ENCODE measurements at regions of chr1 and their contacts with region 1.

Region 1: DNA sequence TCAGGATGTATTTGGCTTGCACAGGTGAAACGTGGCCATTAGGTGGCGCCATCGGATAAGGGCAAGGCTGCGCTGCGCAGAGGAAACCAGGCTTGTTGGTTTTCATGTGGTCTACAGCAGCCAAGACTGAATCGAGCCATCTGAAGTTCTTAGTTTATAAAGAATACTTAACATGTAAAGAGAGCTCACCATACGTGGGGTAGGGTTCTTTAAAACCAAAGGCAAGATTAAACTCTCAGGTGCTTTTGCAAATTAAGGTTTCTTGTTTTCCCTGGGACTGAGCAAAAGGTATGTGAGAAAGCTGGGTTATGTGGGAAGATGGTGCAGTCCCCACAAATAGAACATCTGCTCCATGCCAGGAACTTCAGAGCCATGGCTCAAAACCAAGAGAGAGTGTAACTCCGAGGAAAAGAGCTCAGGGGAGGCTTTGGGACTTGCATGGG is 9.3 kb downstream of the MASP2 start:
- DNase-seq: peak; percentile 51
- ATAC-seq: peak; percentile 99
- H3K4me3 ChIP-seq: no peak overlapping the region
- H3K27ac ChIP-seq: no peak overlapping the region
- H3K4me1 ChIP-seq: no peaks in the 10 kb centered on the region
- H3K27me3 ChIP-seq: no peaks in the 10 kb centered on the region
- CTCF ChIP-seq: peak; percentile 96 to 99 (median 98); a peak in 5 of 6 replicates
- EP300 ChIP-seq: no peak
- POLR2A ChIP-seq: no peak
- RAD21 ChIP-seq: peak; percentile 99

Region 2: GRCh38 chr1:11026052-11026451 is 11.7 kb before region 1 on chr1:
- CTCF ChIA-PET with region 1: interaction called, 11 read pairs
- POLR2A ChIA-PET with region 1: interaction called, 3 read pairs
- RAD21 ChIA-PET with region 1: interaction called, 7 read pairs
- SMC1A ChIA-PET with region 1: interaction called, 5 read pairs
- in situ Hi-C with region 1: no loop called
- intact Hi-C with region 1: no loop called
- DNase-seq: no peak
- ATAC-seq: no peak
- H3K4me3 ChIP-seq: no peak overlapping the region
- H3K27ac ChIP-seq: no peak overlapping the region
- H3K4me1 ChIP-seq: no peaks in the 10 kb centered on the region
- H3K27me3 ChIP-seq: no peaks in the 10 kb centered on the region
- CTCF ChIP-seq: no peak
- EP300 ChIP-seq: no peak
- POLR2A ChIP-seq: no peak
- RAD21 ChIP-seq: no peak

Region 3: DNA sequence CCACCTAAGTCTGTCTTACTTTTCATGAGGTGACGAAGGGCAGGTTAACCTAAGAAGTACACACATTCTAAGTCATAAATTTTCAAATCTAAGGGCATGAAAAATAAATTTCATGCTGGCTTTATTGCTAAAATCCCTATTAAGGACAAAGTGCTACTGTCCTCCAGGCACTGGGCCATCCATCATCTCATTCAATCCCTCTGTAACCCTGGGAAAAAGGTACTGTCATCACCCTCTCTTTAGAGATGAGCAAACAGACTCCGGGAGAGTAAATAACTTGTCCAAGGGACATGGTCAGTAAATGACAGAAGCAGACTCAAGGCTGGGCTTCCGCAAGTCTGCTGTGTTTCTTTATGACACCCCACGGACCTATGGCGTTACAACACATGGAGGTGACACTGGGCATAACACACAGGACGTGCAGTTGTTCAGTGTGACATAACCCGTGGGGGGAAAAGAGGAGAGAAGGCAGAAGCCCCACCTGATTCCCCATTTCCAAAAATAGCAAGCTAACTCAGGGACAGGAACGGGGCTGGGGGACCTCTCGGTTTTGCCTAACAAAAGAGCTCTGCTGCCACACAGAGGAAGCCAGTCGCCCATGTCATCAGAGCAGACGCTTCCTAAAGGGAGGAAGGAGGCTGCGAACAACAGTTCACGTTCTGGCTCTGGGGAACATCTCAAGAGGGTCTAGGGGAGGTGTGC is 34.6 kb after region 1 on chr1:
- CTCF ChIA-PET with region 1: interaction called, 57 read pairs
- POLR2A ChIA-PET with region 1: no interaction called
- RAD21 ChIA-PET with region 1: interaction called, 52 read pairs
- SMC1A ChIA-PET with region 1: interaction called, 35 read pairs
- in situ Hi-C with region 1: no loop called
- intact Hi-C with region 1: loop called (anchors 1 kb)
- DNase-seq: no peak
- ATAC-seq: peak; percentile 83
- H3K4me3 ChIP-seq: no peak overlapping the region
- H3K27ac ChIP-seq: peak overlapping the region; percentile 62
- H3K4me1 ChIP-seq: peaks cover 13% of the 10 kb centered on the region
- H3K27me3 ChIP-seq: no peaks in the 10 kb centered on the region
- CTCF ChIP-seq: peak; percentile 43 to 53 (median 44); a peak in 5 of 6 replicates
- EP300 ChIP-seq: no peak
- POLR2A ChIP-seq: no peak
- RAD21 ChIP-seq: peak; percentile 64

Region 4: GRCh38 chr1:11182884-11183283 is 145.1 kb after region 1 on chr1:
- CTCF ChIA-PET with region 1: interaction called, 11 read pairs
- POLR2A ChIA-PET with region 1: no interaction called
- RAD21 ChIA-PET with region 1: no interaction called
- SMC1A ChIA-PET with region 1: interaction called, 8 read pairs
- in situ Hi-C with region 1: no loop called
- intact Hi-C with region 1: no loop called
- DNase-seq: no peak
- ATAC-seq: no peak
- H3K4me3 ChIP-seq: no peak overlapping the region
- H3K27ac ChIP-seq: no peak overlapping the region
- H3K4me1 ChIP-seq: no peaks in the 10 kb centered on the region
- H3K27me3 ChIP-seq: no peaks in the 10 kb centered on the region
- CTCF ChIP-seq: no peak
- EP300 ChIP-seq: no peak
- POLR2A ChIP-seq: no peak
- RAD21 ChIP-seq: no peak

Region 5: GRCh38 chr1:11227106-11228077 is 189.6 kb after region 1 on chr1:
- CTCF ChIA-PET with region 1: interaction called, 15 read pairs
- POLR2A ChIA-PET with region 1: no interaction called
- RAD21 ChIA-PET with region 1: interaction called, 3 read pairs
- SMC1A ChIA-PET with region 1: interaction called, 3 read pairs
- in situ Hi-C with region 1: no loop called
- intact Hi-C with region 1: no loop called
- DNase-seq: peak; percentile 34
- ATAC-seq: peak; percentile 81
- H3K4me3 ChIP-seq: peak overlapping the region; percentile 9; the same call in 1 of the 2 replicates
- H3K27ac ChIP-seq: peak overlapping the region; percentile 50
- H3K4me1 ChIP-seq: peaks cover 27% of the 10 kb centered on the region
- H3K27me3 ChIP-seq: no peaks in the 10 kb centered on the region
- CTCF ChIP-seq: no peak
- EP300 ChIP-seq: no peak
- POLR2A ChIP-seq: no peak
- RAD21 ChIP-seq: no peak

Region 6: GRCh38 chr1:11262171-11263049 is 224.6 kb after region 1 on chr1 and contains the start of gene MTOR:
- CTCF ChIA-PET with region 1: interaction called, 14 read pairs
- POLR2A ChIA-PET with region 1: no interaction called
- RAD21 ChIA-PET with region 1: interaction called, 3 read pairs
- SMC1A ChIA-PET with region 1: interaction called, 4 read pairs
- in situ Hi-C with region 1: no loop called
- intact Hi-C with region 1: no loop called
- DNase-seq: peak; percentile 99
- ATAC-seq: peak; percentile 99
- H3K4me3 ChIP-seq: peak within 1 kb of the TSS; percentile 92
- H3K27ac ChIP-seq: peak within 1 kb of the TSS; percentile 66
- H3K4me1 ChIP-seq: no peaks in the 10 kb centered on the region
- H3K27me3 ChIP-seq: no peaks in the 10 kb centered on the region
- CTCF ChIP-seq: peak in 2 of 3 experiments; percentile 0 to 18; a peak in 1 of 6 replicates
- EP300 ChIP-seq: no peak
- POLR2A ChIP-seq: peak; percentile 90
- RAD21 ChIP-seq: peak; percentile 10; the same call in 1 of the 2 replicates
- polyA plus RNA-seq, gene MTOR: 6.6 to 7.5 TPM

Region 7: GRCh38 chr1:11735854-11736745 is 698.3 kb after region 1 on chr1 and contains the start of gene AGTRAP:
- CTCF ChIA-PET with region 1: interaction called, 10 read pairs
- POLR2A ChIA-PET with region 1: no interaction called
- RAD21 ChIA-PET with region 1: no interaction called
- SMC1A ChIA-PET with region 1: no interaction called
- in situ Hi-C with region 1: no loop called
- intact Hi-C with region 1: no loop called
- DNase-seq: no peak
- ATAC-seq: peak; percentile 92
- H3K4me3 ChIP-seq: peak within 1 kb of the TSS; percentile 86
- H3K27ac ChIP-seq: peak within 1 kb of the TSS; percentile 35
- H3K4me1 ChIP-seq: peaks cover 10% of the 10 kb centered on the region
- H3K27me3 ChIP-seq: no peaks in the 10 kb centered on the region
- CTCF ChIP-seq: 0 out of 6 replicates have a peak, but pooled peaks of 1 of the 3 experiments have one; percentile 1
- EP300 ChIP-seq: no peak
- POLR2A ChIP-seq: peak; percentile 54; the same call in 1 of the 2 replicates
- RAD21 ChIP-seq: no peak
- polyA plus RNA-seq, gene AGTRAP: 3.0 to 4.1 TPM